Posterior cingulate gyrus (tissue), 11 donors: ENCODE measurements at regions of chr9 and their contacts with region 1.

Region 1: GRCh38 chr9:34591248-34591916 is 1.9 kb upstream of the CNTFR start:
- DNase-seq: peak; percentile 85 to 98 (median 91)

Region 2: DNA sequence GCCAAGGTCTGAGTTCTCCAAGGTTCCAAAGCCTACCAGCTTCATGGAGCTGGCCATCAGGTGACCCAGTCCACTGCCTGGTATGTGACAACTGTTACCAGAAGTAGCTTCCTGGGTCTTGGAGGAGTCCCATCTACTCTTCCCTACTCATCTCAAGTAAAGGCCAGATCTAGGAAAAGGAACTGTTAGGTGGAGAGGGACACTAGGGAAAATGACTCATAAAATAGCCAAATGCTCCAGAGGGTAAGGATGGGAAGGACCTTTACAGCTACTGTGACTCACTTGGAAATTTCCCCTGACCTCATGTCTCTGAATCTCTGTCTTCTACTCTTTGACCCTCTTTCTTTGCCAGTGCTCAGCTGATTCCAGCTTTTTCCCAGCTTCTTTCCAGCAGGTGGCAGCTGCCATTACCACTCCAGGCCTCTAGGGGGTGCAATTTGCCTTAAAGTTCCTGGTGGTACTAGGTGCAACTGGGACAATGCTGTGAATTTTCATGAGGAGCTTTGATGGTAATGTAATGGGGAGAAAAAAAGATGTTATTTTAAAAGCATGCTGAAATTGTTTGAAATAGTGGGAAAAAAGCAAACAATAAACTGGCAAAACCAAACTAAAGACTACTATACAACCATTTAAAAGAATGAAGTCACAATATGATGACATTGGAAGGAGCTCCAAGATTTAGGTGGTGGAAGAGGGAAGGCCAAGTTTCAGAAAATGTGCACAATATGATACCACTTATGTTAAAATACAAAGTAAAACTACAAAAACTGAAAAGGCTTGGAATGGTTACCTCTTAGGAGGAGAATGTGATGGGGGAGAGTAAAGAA is 187.6 kb before region 1 on chr9:
- intact Hi-C with region 1: loop called (anchors 2 kb)
- DNase-seq: peak; percentile 59 to 95 (median 84)

Region 3: DNA sequence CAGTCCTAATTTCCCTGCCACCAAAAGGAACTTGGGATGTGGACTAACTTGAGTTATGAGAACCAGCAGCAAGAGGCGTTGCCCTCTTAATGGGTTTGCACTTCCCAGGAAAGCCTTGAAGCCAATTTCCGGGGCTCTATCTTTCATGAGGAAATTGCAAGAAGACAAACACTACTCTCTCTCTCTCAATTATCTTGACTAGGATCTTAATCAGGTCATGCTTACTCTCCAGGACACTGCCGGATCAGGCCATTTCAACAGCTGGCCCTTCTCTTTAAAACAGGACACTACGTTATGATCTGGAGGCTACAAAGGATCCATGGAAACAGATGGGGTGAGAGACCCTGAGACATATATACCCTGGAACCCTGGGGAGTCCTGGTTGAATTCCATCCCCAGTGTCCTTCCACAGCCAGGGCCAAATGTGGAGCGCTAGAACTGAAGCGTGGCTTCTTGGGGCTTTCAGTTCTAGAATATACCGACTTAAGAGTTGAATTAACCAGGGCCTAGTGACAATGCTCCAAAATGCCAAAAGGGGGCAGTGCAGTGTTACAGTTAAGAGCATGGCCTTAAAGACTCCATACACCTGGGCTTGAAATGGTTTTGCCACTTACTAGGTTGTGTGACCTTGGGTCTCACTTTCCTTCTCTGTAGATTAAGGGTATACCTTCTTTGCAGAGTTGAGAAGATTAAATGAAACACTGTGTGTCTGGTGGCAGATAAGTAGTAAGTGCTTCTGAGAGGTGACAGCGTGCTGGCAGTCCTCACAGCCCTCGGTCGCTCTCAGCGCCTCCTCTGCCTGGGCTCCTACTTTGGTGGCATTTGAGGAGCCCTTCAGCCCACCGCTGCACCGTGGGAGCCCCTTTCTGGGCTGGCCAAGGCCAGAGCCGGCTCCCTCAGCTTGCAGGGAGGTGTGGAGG is 154.1 kb before region 1 on chr9:
- intact Hi-C with region 1: loop called (anchors 5 kb)
- DNase-seq: peak in 5 of 10 donors; percentile 31 to 82 (median 50)

Region 4: GRCh38 chr9:34546834-34547827 is 44.3 kb before region 1 on chr9:
- intact Hi-C with region 1: loop called (anchors 1 kb)
- DNase-seq: peak; percentile 58 to 96 (median 79)